Transverse colon (tissue), 4 donors: ENCODE measurements at regions of chr6 and their contacts with region 1.

Region 1: DNA sequence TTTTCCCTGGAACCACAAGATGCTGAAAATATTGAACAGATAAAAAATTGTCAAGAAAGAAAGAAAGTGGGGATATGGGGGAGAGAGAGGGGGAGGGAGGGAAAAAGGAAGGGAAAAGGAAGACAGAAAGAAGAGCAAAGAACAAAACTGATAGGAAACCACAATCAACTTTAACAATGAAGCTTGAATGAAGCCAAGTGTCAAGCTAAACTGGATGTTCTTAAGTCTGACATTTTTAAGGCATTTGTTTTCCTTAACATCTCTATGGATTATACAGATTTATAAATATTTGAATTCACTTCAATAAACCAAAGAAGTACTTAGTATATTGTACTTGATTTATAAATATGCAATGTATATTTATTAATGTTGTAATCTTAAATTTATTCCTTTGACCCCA is 197.6 kb upstream of the SMLR1 start:
- DNase-seq: no peak
- H3K4me3 ChIP-seq: no peak overlapping the region
- H3K27ac ChIP-seq: no peak overlapping the region
- H3K4me1 ChIP-seq: no peaks in the 10 kb centered on the region
- H3K27me3 ChIP-seq: no peaks in the 10 kb centered on the region
- CTCF ChIP-seq: no peak
- EP300 ChIP-seq: no peak
- POLR2A ChIP-seq: no peak

Region 2: GRCh38 chr6:130076512-130076911 is 553.1 kb before region 1 on chr6:
- in situ Hi-C with region 1: no loop called
- intact Hi-C with region 1: no loop called
- DNase-seq: no peak
- H3K4me3 ChIP-seq: no peak overlapping the region
- H3K27ac ChIP-seq: no peak overlapping the region
- H3K4me1 ChIP-seq: no peaks in the 10 kb centered on the region
- H3K27me3 ChIP-seq: no peaks in the 10 kb centered on the region
- CTCF ChIP-seq: no peak
- EP300 ChIP-seq: no peak
- POLR2A ChIP-seq: no peak

Region 3: DNA sequence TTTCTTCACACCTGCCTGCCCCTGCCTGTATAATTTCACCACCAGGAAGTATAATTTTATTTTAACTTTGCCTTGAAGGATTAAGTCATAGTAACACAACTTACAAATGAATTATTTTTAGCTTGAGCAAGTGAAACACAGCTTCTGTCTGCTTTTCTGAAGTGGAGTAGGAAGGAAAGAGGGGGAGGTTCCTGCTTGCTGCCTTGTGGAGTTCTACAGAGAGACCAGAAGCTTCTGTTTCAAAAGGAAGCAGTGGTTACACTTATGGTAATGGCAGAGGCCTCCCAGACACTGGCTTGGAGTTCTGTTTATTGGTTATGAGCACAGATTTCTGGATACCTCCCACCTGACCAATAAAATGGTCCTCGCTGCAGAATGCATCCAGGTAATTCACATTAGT is 104.2 kb before region 1 on chr6:
- in situ Hi-C with region 1: no loop called
- intact Hi-C with region 1: no loop called
- DNase-seq: no peak
- H3K4me3 ChIP-seq: no peak overlapping the region
- H3K27ac ChIP-seq: no peak overlapping the region
- H3K4me1 ChIP-seq: no peaks in the 10 kb centered on the region
- H3K27me3 ChIP-seq: no peaks in the 10 kb centered on the region
- CTCF ChIP-seq: no peak
- EP300 ChIP-seq: no peak
- POLR2A ChIP-seq: no peak

Region 4: DNA sequence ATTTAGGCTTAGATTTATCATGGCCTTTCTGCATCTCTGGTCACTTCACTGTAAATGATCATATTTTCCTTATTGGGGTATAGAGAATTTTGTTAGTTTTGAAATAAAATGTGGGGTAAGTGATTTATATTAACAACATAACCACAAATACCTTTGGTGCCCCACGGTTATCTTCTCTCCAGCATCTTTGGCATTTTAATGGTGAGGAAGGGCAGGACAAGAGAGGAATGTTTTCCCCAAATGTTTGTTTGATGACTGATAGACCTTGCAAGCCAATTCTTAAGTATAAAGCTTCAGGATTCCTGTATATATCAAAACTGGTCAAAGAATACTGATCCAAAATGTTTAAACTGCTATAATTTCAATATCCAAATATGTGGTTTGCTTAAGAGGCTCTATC is 25.9 kb after region 1 on chr6:
- in situ Hi-C with region 1: no loop called
- intact Hi-C with region 1: loop called (anchors 1 kb)
- DNase-seq: no peak
- H3K4me3 ChIP-seq: no peak overlapping the region
- H3K27ac ChIP-seq: no peak overlapping the region
- H3K4me1 ChIP-seq: no peaks in the 10 kb centered on the region
- H3K27me3 ChIP-seq: no peaks in the 10 kb centered on the region
- CTCF ChIP-seq: no peak
- EP300 ChIP-seq: no peak
- POLR2A ChIP-seq: no peak

Region 5: DNA sequence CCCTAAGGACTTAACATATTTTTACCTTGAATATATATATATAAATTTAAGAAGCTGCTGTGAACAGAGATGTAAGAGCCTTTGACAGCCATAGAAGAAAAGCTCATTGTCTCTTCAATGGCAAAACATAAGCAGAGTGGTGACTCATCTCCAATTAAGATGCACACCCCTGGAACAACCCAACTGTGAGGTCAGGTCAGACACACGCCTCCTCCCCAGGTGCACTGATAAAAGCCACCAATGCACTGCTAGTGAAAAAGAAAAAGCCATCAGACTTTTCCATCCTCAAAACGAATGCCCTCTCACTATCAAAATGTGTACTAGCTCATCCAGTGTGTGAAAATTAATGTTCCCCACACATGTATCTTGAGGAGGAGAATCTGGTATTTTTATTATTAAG is 297.7 kb after region 1 on chr6:
- in situ Hi-C with region 1: no loop called
- intact Hi-C with region 1: no loop called
- DNase-seq: peak; percentile 18
- H3K4me3 ChIP-seq: no peak overlapping the region
- H3K27ac ChIP-seq: no peak overlapping the region
- H3K4me1 ChIP-seq: peaks cover 0 to 14% (median 5%) of the 10 kb centered on the region in 4 donors
- H3K27me3 ChIP-seq: no peaks in the 10 kb centered on the region
- CTCF ChIP-seq: no peak
- EP300 ChIP-seq: no peak
- POLR2A ChIP-seq: no peak